ENCODE measurements at regions of chr2 and their contacts with region 1.

Region 1: DNA sequence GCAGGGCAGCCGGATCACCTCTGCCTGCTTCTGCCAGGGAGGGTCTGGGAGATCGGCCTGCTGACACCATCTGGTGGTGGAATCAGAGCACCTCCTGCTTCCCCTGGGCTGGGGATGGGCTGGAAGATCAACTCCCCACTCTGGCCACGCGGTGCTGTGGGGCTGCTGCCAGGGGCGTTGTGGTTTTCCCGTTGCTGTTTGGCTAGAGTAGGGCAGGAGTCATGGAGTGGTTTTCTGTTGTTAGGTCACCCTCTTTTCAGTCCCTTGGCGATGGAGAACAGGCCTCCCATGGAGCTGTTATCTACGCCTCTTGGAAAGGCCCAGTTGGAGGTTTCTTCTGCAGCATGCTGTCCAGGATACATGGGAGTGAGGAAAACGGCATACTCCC is 15.2 kb downstream of the BCL2L11 start:
- DNase-seq: peak in 1 of 2 experiments; percentile 32
- H3K4me3 ChIP-seq: no peak overlapping the region
- H3K27ac ChIP-seq: no peak overlapping the region
- H3K4me1 ChIP-seq: 0 out of 2 replicates have a peak, but pooled peaks cover 10% of the 10 kb centered on the region
- H3K27me3 ChIP-seq: no peaks in the 10 kb centered on the region
- CTCF ChIP-seq: no peak

Region 2: GRCh38 chr2:110973262-110973661 is 162.6 kb before region 1 on chr2:
- CTCF ChIA-PET with region 1: interaction called, 13 read pairs
- POLR2A ChIA-PET with region 1: no interaction called
- intact Hi-C with region 1: no loop called
- DNase-seq: no peak
- H3K4me3 ChIP-seq: no peak overlapping the region
- H3K27ac ChIP-seq: no peak overlapping the region
- H3K4me1 ChIP-seq: no peaks in the 10 kb centered on the region
- H3K27me3 ChIP-seq: no peaks in the 10 kb centered on the region
- CTCF ChIP-seq: no peak

Measured in PC-9 (cell line).